Activated T-helper 1 cell treated with anti-CD3 and anti-CD28 coated beads, Interleukin-12 subunit alpha, Interleukin-12 subunit beta, Interleukin-2, Interleukin-4 antibody, amounts not matched to agents 30 ng/mL and 10 ng/mL and 1 ng/mL, durations not matched to agents 14 hours and 24 hours and 36 hours (primary cell): ENCODE measurements at regions of chr12 and their contacts with region 1.

Region 1: DNA sequence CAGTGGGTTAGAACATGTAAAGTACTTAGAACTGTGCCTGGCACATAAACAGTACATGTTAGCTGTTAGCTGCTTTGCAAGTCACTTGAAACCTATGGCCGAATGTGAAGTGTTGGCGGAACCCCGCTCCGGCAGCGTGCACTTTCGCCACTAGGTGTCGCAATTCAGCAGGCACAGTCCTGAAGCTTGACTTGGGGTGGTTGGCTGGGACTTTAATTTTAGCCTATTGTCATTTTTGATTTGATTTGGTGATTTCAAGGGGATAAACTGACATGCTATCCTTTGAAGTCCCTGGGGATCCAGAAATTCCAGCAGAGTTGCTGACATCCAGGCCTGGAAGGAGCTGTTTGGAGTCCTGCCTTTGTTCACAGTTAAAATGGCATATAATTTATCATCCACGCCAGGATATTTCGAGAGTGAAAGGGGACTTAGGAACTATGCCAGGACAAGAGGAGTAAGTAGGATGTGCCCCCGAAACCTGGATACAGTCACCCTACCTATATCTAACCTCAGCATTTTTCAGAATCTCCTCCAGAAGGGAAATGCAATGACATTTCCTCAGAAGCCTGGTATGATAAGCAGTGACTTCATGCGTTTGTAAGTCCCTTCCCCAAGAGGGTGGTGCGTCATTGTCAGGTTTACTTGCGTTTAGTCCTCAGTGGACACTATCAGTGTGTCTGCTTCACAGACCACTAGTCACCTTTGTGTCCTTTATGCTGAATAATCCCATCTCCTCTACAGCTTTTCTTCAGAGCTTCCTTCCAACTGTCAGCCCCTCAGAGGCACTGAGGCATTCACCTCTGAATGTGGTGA is 3.5 kb upstream of the TSPAN9 start:
- DNase-seq: peak; percentile 71
- H3K4me3 Mint-ChIP-seq: peak overlapping the region; percentile 15
- H3K27ac Mint-ChIP-seq: no peak overlapping the region
- H3K4me1 Mint-ChIP-seq: peaks cover 10% of the 10 kb centered on the region
- H3K27me3 Mint-ChIP-seq: peaks cover 27% of the 10 kb centered on the region

Region 2: DNA sequence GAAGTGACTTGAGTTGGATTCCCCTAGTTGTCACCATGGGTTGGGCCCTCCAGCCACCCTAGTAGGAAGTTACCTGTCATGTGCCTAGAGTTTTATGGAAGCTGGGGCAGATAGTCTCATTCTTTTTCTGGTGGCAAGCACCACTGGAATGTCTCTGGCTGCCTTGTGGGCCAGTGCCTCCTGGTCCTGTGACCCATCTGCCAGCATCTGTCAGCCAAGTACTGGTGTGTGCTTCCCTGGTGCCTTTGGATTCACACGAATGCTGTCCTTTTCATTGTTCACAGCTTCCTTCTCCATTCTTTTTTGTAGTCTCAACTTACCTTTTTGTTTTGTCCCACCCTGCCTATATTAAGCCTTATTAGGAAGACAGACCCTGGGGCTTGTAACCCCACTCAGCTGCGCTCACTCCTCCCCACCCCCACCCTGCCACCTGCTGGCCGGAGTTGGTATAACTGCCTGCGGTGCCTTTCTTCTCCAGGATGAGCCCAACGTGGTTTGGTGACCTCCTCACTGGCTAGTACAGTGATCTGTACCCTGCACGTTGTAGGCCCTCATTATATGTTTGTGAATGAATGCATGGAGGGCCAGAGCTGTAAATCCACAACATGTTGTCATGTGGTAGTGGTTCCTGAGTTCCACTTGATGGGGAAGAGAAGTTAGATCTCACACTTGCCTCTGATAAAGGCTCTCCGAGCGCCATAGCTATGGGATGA is 129.2 kb after region 1 on chr12:
- intact Hi-C with region 1: loop called (anchors 1 kb)
- DNase-seq: peak; percentile 11
- H3K4me3 Mint-ChIP-seq: no peak overlapping the region
- H3K27ac Mint-ChIP-seq: no peak overlapping the region
- H3K4me1 Mint-ChIP-seq: no peaks in the 10 kb centered on the region
- H3K27me3 Mint-ChIP-seq: peaks cover 31% of the 10 kb centered on the region

Region 3: DNA sequence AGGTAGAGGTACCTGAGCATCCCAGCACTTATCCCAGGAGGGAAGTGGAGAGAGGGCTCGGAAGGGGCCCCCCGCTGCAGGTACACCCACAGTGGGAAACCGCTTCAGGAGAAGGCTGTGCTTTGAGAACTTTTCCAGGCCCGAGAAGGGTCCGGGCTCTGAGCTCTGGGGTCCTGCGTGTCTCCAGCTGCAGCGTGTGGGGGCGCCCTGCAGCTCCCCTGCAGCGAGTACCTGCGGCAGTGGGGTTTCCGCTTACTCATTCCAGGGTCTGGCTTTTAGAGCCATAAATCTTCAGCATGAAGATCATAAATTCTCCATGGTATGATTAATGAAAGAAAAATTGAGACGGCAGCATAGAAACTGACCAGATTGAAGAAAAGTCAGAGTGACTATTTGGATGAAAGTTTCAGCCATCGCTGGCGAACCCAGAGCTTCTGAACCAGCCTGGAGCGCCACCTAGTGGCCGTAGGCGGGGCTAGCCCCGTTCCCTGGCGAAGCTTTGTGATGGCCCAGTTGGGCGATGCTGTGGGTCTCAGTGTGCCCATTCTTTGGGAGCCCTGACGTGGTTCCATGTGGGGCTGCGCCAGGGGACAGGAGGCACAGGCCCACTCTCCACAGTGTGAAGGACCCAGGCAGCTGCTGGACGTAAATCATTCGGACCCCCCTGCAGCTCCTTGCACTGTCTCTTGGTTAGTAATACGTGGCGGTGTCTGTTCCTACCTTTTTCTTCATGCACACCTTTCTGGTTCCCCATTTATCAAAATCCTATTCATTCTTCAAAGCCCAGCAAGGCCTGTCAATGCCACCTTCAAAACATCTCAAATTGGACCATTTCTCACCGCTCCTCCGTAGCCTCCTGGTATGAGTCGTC is 201.8 kb after region 1 on chr12:
- intact Hi-C with region 1: loop called (anchors 1 kb)
- DNase-seq: peak; percentile 51
- H3K4me3 Mint-ChIP-seq: no peak overlapping the region
- H3K27ac Mint-ChIP-seq: no peak overlapping the region
- H3K4me1 Mint-ChIP-seq: no peaks in the 10 kb centered on the region
- H3K27me3 Mint-ChIP-seq: peaks cover 12% of the 10 kb centered on the region

Region 4: GRCh38 chr12:4320853-4321701 is 1247.4 kb after region 1 on chr12 and contains the start of gene TIGAR:
- intact Hi-C with region 1: loop called (anchors 5 kb)
- DNase-seq: peak; percentile 93
- H3K4me3 Mint-ChIP-seq: peak within 1 kb of the TSS; percentile 93
- H3K27ac Mint-ChIP-seq: peak within 1 kb of the TSS; percentile 93
- H3K4me1 Mint-ChIP-seq: peaks cover 45% of the 10 kb centered on the region
- H3K27me3 Mint-ChIP-seq: no peaks in the 10 kb centered on the region
- total RNA-seq, gene TIGAR: 14.4 TPM in 2 replicates